Calu3 (cell line): ENCODE measurements at regions of chr15 and their contacts with region 1.

Region 1: DNA sequence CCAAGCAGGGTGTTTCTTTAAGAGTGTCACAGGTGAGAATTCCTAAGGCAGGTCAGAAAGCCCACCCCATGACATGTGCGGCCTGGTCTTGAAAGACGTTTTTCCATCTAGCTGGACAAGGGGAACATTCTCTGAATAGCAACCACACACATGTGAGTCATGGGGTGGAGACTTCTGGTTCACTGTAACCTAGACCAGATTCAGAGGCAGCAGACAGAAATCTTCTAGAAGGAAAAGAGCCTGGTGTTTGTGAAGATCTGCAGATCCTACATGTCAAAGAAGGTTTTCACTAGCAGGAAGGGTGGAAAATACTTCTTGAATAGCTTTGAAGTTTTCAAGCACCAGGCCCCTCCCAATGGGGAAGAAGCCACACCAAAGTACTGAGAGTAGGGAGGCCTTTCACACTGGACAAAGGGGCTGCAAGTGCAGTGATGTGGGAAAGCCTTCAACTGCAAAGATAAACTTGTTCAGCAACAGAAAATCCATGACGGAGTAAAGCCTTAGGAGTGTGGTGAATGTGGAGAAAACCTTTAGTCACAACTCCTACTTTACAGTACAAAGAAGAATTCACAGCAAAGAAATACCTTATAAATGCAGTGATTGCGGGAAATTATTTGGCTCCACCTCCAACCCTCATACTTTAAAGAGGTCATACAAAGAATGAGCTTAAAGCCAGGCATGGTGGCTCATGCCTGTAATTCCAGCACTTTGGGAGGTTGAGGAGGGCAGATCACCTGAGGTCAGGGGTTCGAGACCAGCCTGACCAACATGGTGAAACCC is 17.6 kb downstream of the ADAM10 start:
- DNase-seq: peak; percentile 69
- H3K4me3 Mint-ChIP-seq: peak overlapping the region; percentile 26
- H3K27ac Mint-ChIP-seq: peak overlapping the region; percentile 94
- H3K4me1 Mint-ChIP-seq: peaks cover 60% of the 10 kb centered on the region
- H3K27me3 Mint-ChIP-seq: no peaks in the 10 kb centered on the region
- CTCF ChIP-seq: no peak

Region 2: DNA sequence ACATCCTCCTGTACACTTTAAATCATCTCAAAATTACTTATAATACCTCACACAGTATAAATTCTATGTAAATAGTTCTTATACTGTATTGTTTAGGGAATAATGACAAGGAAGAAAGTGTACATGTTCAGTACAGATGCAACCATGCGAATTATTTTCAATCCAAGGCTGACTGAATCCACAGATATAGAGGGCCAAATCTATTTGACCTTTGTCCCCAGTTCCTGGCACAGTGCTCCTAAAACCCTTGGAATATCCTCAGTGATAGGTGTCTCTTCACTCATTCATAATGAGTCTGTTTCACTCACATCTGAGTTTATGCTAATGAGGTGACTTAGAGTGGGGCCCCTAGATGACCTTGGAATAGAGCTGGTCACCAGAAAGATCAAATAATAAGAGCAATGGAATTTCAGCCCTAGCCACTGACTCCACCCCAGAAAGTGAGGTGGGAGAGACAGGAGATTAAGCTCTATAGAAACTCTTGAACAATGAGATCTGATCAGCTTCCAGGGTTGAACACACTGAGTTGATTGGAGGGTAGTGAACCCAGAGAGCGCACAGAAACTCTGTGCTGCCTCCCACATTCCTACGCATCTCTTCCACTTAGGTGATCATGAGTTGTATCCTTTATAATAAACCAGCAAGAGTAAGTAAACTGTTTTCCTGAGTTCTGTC is 47.8 kb before region 1 on chr15:
- CTCF ChIA-PET with region 1: no interaction called
- intact Hi-C with region 1: loop called (anchors 10 kb)
- DNase-seq: no peak
- H3K4me3 Mint-ChIP-seq: no peak overlapping the region
- H3K27ac Mint-ChIP-seq: no peak overlapping the region
- H3K4me1 Mint-ChIP-seq: peaks cover 28% of the 10 kb centered on the region
- H3K27me3 Mint-ChIP-seq: no peaks in the 10 kb centered on the region
- CTCF ChIP-seq: no peak

Region 3: DNA sequence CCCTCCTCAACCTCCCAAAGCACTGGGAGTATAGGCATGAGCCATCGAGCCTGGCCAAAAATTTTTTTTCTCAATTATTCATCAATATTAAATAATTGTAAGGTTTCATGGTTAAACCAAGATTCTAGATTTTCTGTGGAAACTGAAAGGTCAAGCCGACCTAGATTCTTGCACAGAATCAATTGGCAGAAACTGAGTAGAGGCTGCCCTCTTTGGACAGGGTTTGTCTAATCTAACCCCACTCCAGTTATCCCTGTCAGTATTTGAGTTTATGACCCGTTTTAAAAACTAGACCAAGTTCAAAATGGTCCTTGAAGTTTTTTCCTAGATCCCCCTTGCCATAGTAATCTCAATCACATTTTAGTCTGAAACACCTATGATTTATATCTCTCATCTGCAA is 26.2 kb after region 1 on chr15:
- CTCF ChIA-PET with region 1: no interaction called
- intact Hi-C with region 1: no loop called
- DNase-seq: peak; percentile 33
- H3K4me3 Mint-ChIP-seq: no peak overlapping the region
- H3K27ac Mint-ChIP-seq: no peak overlapping the region
- H3K4me1 Mint-ChIP-seq: peaks cover 12% of the 10 kb centered on the region
- H3K27me3 Mint-ChIP-seq: no peaks in the 10 kb centered on the region
- CTCF ChIP-seq: no peak